Activated CD4-positive, alpha-beta T cell treated with anti-CD3 and anti-CD28 coated beads for 36 hours (primary cell): ENCODE measurements at regions of chr15 and their contacts with region 1.

Region 1: DNA sequence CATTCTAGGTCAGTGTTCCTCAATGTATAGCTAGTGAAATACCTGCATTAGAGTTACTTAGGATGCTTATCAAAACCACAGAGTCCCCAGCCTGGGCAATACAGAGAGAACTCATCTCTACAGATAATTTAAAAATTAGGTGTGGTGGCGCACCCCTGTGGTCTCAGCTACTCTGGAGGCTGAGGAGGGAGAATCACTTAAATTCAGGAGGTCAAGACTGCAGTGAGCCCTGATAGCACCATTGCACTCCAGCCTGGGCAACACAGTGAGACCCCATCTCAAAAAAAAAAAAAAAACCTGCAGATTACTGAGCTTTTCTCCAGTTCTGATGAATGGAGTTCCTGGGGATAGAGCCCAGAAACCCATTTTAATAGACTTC is 10.1 kb upstream of the MINDY2 start:
- DNase-seq: peak; percentile 53
- ATAC-seq: peak; percentile 42
- H3K4me3 Mint-ChIP-seq: no peak overlapping the region
- H3K27ac Mint-ChIP-seq: no peak overlapping the region
- H3K4me1 Mint-ChIP-seq: no peaks in the 10 kb centered on the region
- H3K27me3 Mint-ChIP-seq: no peaks in the 10 kb centered on the region

Region 2: GRCh38 chr15:58227706-58228543 is 533.1 kb before region 1 on chr15:
- CTCF ChIA-PET with region 1: no interaction called
- POLR2A ChIA-PET with region 1: no interaction called
- intact Hi-C with region 1: loop called (anchors 1 to 2 kb)
- DNase-seq: peak; percentile 84
- ATAC-seq: peak; percentile 64
- H3K4me3 Mint-ChIP-seq: no peak overlapping the region
- H3K27ac Mint-ChIP-seq: no peak overlapping the region
- H3K4me1 Mint-ChIP-seq: peaks cover 9% of the 10 kb centered on the region
- H3K27me3 Mint-ChIP-seq: peaks cover 2% of the 10 kb centered on the region

Region 3: DNA sequence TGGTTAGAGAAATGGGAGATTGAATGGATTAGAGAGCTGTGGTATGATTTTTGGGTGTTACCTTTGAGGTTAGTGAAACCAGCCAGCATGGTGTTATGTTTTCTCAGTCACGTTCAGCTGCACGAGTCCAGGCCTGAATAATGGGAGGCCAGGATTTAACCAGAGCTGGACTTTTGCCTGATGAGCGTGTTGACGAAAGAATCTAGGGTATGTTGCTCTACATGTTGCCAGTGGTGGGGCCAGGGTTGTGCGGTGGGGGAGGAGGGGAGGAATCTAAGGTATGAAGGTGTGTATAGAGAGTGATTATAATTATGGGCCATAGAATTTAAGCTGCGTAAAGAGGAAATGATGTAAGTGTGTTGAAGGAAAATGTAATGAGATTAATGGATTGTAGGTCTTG is 32.9 kb after region 1 on chr15:
- CTCF ChIA-PET with region 1: no interaction called
- POLR2A ChIA-PET with region 1: no interaction called
- intact Hi-C with region 1: no loop called
- DNase-seq: no peak
- ATAC-seq: no peak
- H3K4me3 Mint-ChIP-seq: no peak overlapping the region
- H3K27ac Mint-ChIP-seq: no peak overlapping the region
- H3K4me1 Mint-ChIP-seq: peaks cover 13% of the 10 kb centered on the region
- H3K27me3 Mint-ChIP-seq: no peaks in the 10 kb centered on the region